ENCODE measurements at regions of chr6 and their contacts with region 1.

Region 1: DNA sequence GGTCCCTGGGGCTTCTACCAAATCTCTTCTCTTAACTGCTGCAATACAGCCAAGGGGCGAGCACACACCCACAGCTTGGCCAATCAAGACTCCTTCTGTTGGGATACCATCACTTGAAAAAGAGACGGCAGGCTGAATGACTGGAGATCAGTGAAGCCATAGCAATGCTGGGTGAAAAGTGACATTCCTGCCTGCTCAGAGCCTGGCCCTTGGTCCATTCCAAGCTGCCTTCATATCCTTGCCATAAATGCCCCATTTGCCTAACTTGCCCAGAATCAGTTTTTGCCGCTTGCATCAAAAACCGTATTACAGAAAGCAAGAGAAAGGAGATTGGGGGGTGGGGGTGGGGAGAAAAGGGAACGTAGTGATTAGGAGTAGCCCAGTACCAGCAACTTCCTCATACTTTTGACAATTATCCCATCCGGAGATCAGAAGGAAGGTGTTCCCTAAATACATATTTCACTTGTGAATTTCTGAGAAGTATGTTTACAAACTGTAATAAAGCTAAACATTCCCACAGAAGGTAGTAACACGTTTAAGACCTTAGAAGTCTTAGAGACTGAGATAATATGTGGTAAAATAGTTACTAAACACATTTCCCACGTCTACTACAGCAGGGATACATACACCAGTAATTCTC is 14.6 kb downstream of the PREP start:
- H3K4me3 ChIP-seq: no peak overlapping the region
- H3K27ac ChIP-seq: no peak overlapping the region
- H3K4me1 ChIP-seq: peaks cover 3% of the 10 kb centered on the region
- CTCF ChIP-seq: no peak

Region 2: DNA sequence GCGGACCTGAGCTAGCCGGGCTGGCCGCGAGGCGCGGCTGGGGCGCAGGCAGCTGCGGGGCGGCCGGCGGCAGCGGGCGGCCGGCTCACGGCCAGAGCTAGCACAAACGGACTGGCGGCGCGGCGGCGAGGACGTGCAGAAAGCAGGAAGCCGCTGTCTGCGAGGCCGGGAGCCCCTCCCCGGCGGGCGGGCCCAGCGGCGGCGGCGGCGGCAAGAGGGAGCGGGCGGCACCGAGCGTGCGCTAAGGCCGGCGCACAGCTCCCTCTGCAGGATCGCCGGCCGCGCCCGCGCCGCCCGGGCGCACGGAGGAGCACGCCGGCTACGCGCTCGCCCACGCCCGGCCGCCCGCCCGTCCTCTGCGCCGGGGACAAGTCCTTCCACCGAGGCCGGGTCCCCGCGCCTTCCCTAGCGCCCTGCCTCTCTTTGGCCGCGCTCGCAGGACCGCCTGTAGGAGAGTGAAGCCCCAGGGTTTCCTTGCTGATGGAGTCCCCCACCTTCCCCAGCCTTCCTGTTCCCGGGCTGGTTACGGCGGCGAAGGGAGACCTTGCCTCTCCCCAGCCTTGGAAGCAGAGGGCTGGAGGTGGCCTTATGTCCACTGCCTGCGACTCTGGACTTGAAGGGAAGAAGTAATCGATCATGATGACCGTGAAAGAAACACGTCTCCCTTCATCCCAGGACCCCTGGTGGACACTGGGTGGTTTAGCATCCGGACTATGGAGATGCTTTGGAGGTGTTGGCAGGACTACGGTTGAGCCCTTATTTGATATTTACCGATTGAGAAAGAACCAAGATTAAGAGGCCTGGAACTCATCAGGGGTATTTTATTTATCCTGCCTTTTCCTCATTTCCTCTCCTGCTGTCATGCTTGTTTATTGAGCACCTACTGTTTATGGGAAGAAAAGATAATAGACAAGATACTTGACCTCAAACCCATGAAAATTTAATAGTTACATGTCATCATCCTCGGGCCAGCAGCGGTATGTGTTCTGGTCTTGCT is 15.0 kb after region 1 on chr6 and contains the start of gene PREP:
- CTCF ChIA-PET with region 1: interaction called, 14 read pairs
- POLR2A ChIA-PET with region 1: interaction called, 4 read pairs
- H3K4me3 ChIP-seq: peak within 1 kb of the TSS; percentile 73
- H3K27ac ChIP-seq: peak within 1 kb of the TSS; percentile 70; the same call in 1 of the 2 replicates
- H3K4me1 ChIP-seq: 0 out of 2 replicates have a peak, but pooled peaks cover 3% of the 10 kb centered on the region
- CTCF ChIP-seq: peak; percentile 87

Measured in HEK293 (cell line).